ENCODE measurements at regions of chr11 and their contacts with region 1.

Region 1: GRCh38 chr11:20647976-20648565 is 21.3 kb upstream of the NELL1 start:
- DNase-seq: no peak
- ATAC-seq: no peak

Region 2: GRCh38 chr11:21511835-21512440 is 863.9 kb after region 1 on chr11:
- intact Hi-C with region 1: loop called (anchors 5 kb)
- DNase-seq: no peak
- ATAC-seq: no peak

Region 3: DNA sequence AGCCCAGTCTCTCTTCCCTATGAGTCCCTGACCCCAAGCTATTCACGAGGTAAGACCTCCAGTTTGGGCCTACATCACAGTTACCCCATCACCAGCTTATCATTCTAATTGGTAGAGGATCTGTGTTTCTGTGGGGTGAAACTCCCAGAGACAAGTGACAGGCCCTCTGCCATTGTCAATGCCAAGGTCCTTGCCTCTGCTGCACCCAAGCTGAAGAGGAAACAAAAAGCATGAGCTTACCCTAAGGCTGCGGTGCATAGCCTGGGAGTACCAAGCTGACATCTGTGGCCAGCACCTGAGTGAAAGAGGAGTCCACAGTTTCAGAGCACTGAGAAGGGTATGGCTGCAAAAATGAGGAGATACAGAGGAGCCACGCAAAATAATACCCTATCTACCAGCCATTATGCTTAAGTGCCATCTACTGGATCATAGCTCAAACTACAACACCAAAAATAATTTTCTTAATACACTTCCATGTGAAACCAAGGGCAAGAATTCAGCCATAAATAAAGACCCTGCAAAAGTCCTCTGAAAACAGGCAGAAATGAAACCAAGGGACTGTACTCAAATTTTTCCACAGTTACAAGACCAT is 1482.5 kb after region 1 on chr11:
- intact Hi-C with region 1: loop called (anchors 5 kb)
- DNase-seq: no peak
- ATAC-seq: peak; percentile 39

Region 4: GRCh38 chr11:22304337-22304961 is 1656.4 kb after region 1 on chr11:
- intact Hi-C with region 1: loop called (anchors 10 kb)
- DNase-seq: no peak
- ATAC-seq: no peak

Measured in Right ventricle myocardium inferior (tissue), 1 donor.